CD4-positive, alpha-beta T cell (primary cell): ENCODE measurements at regions of chr2 and their contacts with region 1.

Region 1: DNA sequence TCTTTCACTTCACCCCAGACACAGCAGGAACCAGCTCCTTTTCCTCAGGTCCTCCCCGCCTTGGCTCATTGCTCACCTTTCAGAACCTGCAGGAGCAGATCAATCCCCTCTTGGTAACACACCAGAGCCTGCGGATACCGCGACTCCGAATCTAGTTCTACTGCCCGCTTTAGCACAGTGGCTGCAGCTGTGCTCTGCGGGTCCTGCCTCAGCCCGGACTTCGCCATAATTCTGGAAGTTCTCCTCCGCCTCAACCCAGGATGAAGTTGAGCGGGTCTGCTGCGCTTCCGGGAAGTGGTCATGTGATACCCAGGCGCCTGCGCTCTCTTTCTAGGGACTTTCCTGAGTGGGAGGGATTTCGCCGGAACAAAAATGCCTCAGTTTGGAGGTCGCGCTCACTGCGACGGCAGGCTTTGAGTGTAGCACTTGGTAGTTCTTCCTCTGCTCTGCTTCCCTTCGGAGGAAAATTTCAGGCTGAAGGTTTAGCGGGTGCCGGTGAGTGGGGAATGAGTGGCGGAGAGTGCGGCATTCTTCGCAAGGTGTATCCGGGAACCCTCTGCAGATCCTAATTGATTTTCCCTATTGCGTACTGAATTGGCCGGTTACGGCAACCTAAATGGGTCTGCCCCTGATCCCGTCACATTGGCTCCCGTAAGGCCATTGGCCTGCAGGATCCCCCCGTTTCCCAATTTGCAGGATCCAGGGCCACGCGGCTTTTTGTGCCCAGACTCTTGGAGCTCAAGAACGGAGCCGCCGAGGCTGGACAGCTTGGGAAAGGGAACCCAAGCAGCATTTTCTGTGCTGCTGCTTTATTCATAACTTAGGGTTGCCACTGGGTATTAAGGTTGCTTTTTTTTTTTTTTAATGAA is at the starts of genes MITD1 and MRPL30:
- DNase-seq: peak; percentile 83 to 96 (median 87)
- ATAC-seq: peak; percentile 93
- H3K4me3 ChIP-seq: peak within 1 kb of the TSS; percentile 74
- H3K4me3 Mint-ChIP-seq: peak within 1 kb of the TSS; percentile 97
- H3K27ac ChIP-seq: peak within 1 kb of the TSS; percentile 74 to 78
- H3K27ac Mint-ChIP-seq: peak within 1 kb of the TSS; percentile 92
- H3K4me1 ChIP-seq: peaks cover 31% of the 10 kb centered on the region
- H3K4me1 Mint-ChIP-seq: peaks cover 77% of the 10 kb centered on the region
- H3K27me3 ChIP-seq: no peaks in the 10 kb centered on the region
- H3K27me3 Mint-ChIP-seq: no peaks in the 10 kb centered on the region
- CTCF ChIP-seq: no peak
- total RNA-seq, gene MITD1: 14.1 to 14.6 TPM
- total RNA-seq, gene MRPL30: 8.6 to 9.5 TPM

Region 2: GRCh38 chr2:98608116-98608999 is 572.6 kb before region 1 on chr2 and contains the starts of genes COA5 and UNC50:
- CTCF ChIA-PET with region 1: no interaction called
- POLR2A ChIA-PET with region 1: no interaction called
- intact Hi-C with region 1: loop called in 1 of 2 experiments (anchors 2 kb)
- DNase-seq: peak; percentile 84 to 95 (median 89)
- ATAC-seq: peak; percentile 83
- H3K4me3 ChIP-seq: peak within 1 kb of the TSS; percentile 77
- H3K4me3 Mint-ChIP-seq: peak within 1 kb of the TSS; percentile 85
- H3K27ac ChIP-seq: peak within 1 kb of the TSS; percentile 87 to 91
- H3K27ac Mint-ChIP-seq: peak within 1 kb of the TSS; percentile 89
- H3K4me1 ChIP-seq: peaks cover 43% of the 10 kb centered on the region
- H3K4me1 Mint-ChIP-seq: peaks cover 72% of the 10 kb centered on the region
- H3K27me3 ChIP-seq: no peaks in the 10 kb centered on the region
- H3K27me3 Mint-ChIP-seq: no peaks in the 10 kb centered on the region
- CTCF ChIP-seq: no peak
- total RNA-seq, gene COA5: 29.2 to 30.1 TPM
- total RNA-seq, gene UNC50: 17.1 to 17.5 TPM

Region 3: GRCh38 chr2:99085421-99085820 is 95.6 kb before region 1 on chr2:
- CTCF ChIA-PET with region 1: interaction called, 3 read pairs
- POLR2A ChIA-PET with region 1: interaction called, 3 read pairs
- intact Hi-C with region 1: loop called (anchors 1 to 2 kb)
- DNase-seq: peak in 6 of 14 experiments; percentile 2 to 62 (median 16)
- ATAC-seq: no peak
- H3K4me3 ChIP-seq: no peak overlapping the region
- H3K4me3 Mint-ChIP-seq: no peak overlapping the region
- H3K27ac ChIP-seq: no peak overlapping the region
- H3K27ac Mint-ChIP-seq: no peak overlapping the region
- H3K4me1 ChIP-seq: no peaks in the 10 kb centered on the region
- H3K4me1 Mint-ChIP-seq: peaks cover 7% of the 10 kb centered on the region
- H3K27me3 ChIP-seq: no peaks in the 10 kb centered on the region
- H3K27me3 Mint-ChIP-seq: peaks cover 15% of the 10 kb centered on the region
- CTCF ChIP-seq: peak; percentile 30

Region 4: GRCh38 chr2:99141110-99142108 is 39.6 kb before region 1 on chr2 and contains the start of gene C2orf15:
- CTCF ChIA-PET with region 1: interaction called, 4 read pairs
- POLR2A ChIA-PET with region 1: interaction called, 22 read pairs
- intact Hi-C with region 1: loop called (anchors 1 to 2 kb)
- DNase-seq: peak; percentile 92 to 99 (median 97)
- ATAC-seq: peak; percentile 85
- H3K4me3 ChIP-seq: peak within 1 kb of the TSS; percentile 74
- H3K4me3 Mint-ChIP-seq: peak within 1 kb of the TSS; percentile 97
- H3K27ac ChIP-seq: peak within 1 kb of the TSS; percentile 85 to 92
- H3K27ac Mint-ChIP-seq: peak within 1 kb of the TSS; percentile 94
- H3K4me1 ChIP-seq: peaks cover 8% of the 10 kb centered on the region
- H3K4me1 Mint-ChIP-seq: peaks cover 33% of the 10 kb centered on the region
- H3K27me3 ChIP-seq: no peaks in the 10 kb centered on the region
- H3K27me3 Mint-ChIP-seq: no peaks in the 10 kb centered on the region
- CTCF ChIP-seq: no peak
- total RNA-seq, gene C2orf15: 2.1 to 2.8 TPM

Region 5: GRCh38 chr2:99154643-99155536 is 26.1 kb before region 1 on chr2 and contains the starts of genes LIPT1 and TSGA10:
- CTCF ChIA-PET with region 1: interaction called, 6 read pairs
- POLR2A ChIA-PET with region 1: interaction called, 32 read pairs
- intact Hi-C with region 1: loop called (anchors 1 to 2 kb)
- DNase-seq: peak; percentile 81 to 97 (median 89)
- ATAC-seq: peak; percentile 93
- H3K4me3 ChIP-seq: peak within 1 kb of the TSS; percentile 69
- H3K4me3 Mint-ChIP-seq: no peak within 1 kb of the TSS
- H3K27ac ChIP-seq: peak within 1 kb of the TSS; percentile 93 to 95
- H3K27ac Mint-ChIP-seq: no peak within 1 kb of the TSS
- H3K4me1 ChIP-seq: peaks cover 21% of the 10 kb centered on the region
- H3K4me1 Mint-ChIP-seq: peaks cover 43% of the 10 kb centered on the region
- H3K27me3 ChIP-seq: no peaks in the 10 kb centered on the region
- H3K27me3 Mint-ChIP-seq: no peaks in the 10 kb centered on the region
- CTCF ChIP-seq: no peak
- total RNA-seq, gene LIPT1: 12.5 to 13.3 TPM
- total RNA-seq, gene TSGA10: 10.6 to 11.0 TPM

Region 6: GRCh38 chr2:99169534-99169933 is 11.5 kb before region 1 on chr2:
- CTCF ChIA-PET with region 1: no interaction called
- POLR2A ChIA-PET with region 1: interaction called, 15 read pairs
- intact Hi-C with region 1: no loop called
- DNase-seq: no peak
- ATAC-seq: no peak
- H3K4me3 ChIP-seq: no peak overlapping the region
- H3K4me3 Mint-ChIP-seq: no peak overlapping the region
- H3K27ac ChIP-seq: no peak overlapping the region
- H3K27ac Mint-ChIP-seq: peak overlapping the region; percentile 20
- H3K4me1 ChIP-seq: peaks cover 5% of the 10 kb centered on the region
- H3K4me1 Mint-ChIP-seq: peaks cover 5% of the 10 kb centered on the region
- H3K27me3 ChIP-seq: no peaks in the 10 kb centered on the region
- H3K27me3 Mint-ChIP-seq: no peaks in the 10 kb centered on the region
- CTCF ChIP-seq: no peak

Region 7: DNA sequence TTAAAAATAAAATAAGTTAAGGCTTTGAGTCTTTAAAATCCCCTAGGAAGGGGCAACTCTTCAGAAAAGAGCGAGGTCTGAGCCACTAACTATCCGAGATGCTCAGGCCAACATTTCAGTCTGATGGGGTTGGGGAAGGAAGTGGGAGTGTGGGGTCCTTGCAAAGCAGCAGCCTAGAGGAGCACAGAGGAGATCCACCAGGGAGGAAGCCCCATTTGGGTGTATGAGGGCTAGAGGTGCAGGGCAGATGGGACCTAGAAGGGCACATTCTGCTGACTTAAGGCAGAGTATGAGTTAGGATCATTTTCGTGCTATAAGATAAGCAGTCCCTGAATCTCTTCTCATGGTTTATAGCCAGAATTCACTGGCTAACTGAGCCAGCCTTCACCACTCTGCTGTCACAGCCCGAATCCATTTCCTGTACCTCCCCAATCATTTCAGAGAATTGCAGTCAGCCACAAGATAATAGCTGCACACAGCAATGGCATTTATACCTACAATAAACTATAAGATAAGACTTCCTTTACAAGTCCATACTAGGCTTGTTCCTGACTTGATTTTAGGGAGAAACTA is 37.0 kb after region 1 on chr2:
- CTCF ChIA-PET with region 1: no interaction called
- POLR2A ChIA-PET with region 1: no interaction called
- intact Hi-C with region 1: no loop called
- DNase-seq: no peak
- ATAC-seq: no peak
- H3K4me3 ChIP-seq: no peak overlapping the region
- H3K4me3 Mint-ChIP-seq: no peak overlapping the region
- H3K27ac ChIP-seq: no peak overlapping the region
- H3K27ac Mint-ChIP-seq: no peak overlapping the region
- H3K4me1 ChIP-seq: no peaks in the 10 kb centered on the region
- H3K4me1 Mint-ChIP-seq: no peaks in the 10 kb centered on the region
- H3K27me3 ChIP-seq: no peaks in the 10 kb centered on the region
- H3K27me3 Mint-ChIP-seq: no peaks in the 10 kb centered on the region
- CTCF ChIP-seq: no peak

Region 8: GRCh38 chr2:99337113-99338028 is 156.4 kb after region 1 on chr2 and contains the start of gene EIF5B:
- CTCF ChIA-PET with region 1: interaction called, 4 read pairs
- POLR2A ChIA-PET with region 1: interaction called, 30 read pairs
- intact Hi-C with region 1: loop called (anchors 1 kb)
- DNase-seq: peak; percentile 82 to 97 (median 93)
- ATAC-seq: peak; percentile 58
- H3K4me3 ChIP-seq: peak within 1 kb of the TSS; percentile 89
- H3K4me3 Mint-ChIP-seq: no peak within 1 kb of the TSS
- H3K27ac ChIP-seq: peak within 1 kb of the TSS; percentile 72 to 79
- H3K27ac Mint-ChIP-seq: no peak within 1 kb of the TSS
- H3K4me1 ChIP-seq: peaks cover 29% of the 10 kb centered on the region
- H3K4me1 Mint-ChIP-seq: peaks cover 40% of the 10 kb centered on the region
- H3K27me3 ChIP-seq: no peaks in the 10 kb centered on the region
- H3K27me3 Mint-ChIP-seq: no peaks in the 10 kb centered on the region
- CTCF ChIP-seq: peak; percentile 74
- total RNA-seq, gene EIF5B: 27.8 to 33.2 TPM